ENCODE measurements at regions of chr4 and their contacts with region 1.

Region 1: GRCh38 chr4:184171011-184171410 is 46.7 kb downstream of the ENPP6 start:
- DNase-seq: peak; percentile 30
- H3K4me3 ChIP-seq: no peak overlapping the region
- H3K27ac ChIP-seq: no peak overlapping the region
- H3K4me1 ChIP-seq: no peaks in the 10 kb centered on the region
- H3K27me3 ChIP-seq: no peaks in the 10 kb centered on the region; the same call in 1 of the 2 replicates

Region 2: DNA sequence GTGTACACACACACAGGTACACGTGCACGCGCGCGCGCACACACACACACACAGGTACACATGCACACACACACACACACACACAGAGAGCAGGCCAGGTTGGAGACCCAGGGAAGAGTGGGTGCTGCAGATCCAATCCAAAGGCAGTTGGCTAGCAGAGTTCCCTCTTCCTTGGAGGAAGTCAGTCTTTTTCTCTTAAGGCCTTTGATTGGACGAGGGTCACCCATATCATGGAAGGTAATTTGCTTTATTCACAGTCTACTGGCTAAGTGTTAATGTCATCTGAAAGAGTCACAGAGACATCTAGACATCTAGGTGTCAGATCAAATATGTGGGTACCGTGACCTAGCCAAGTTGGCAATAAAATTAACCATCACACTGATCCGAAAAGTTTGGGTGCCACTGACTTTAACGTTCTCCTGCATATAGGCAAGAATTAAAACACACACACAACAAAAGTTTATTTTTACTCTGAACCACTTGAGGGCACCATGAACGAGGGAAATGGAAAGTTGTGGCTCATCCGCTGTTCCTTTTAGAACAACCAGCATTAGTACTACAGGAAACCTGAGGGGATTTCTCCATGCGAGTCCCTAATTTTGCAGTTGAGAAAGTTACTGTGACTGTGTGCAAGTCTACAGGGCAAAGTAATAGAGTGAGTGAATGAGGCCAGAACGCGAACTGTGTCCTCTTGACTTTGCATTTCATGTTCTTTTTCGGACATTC is 331.9 kb before region 1 on chr4:
- in situ Hi-C with region 1: loop called (anchors 5 kb)
- DNase-seq: peak; percentile 12
- H3K4me3 ChIP-seq: no peak overlapping the region
- H3K27ac ChIP-seq: no peak overlapping the region
- H3K4me1 ChIP-seq: no peaks in the 10 kb centered on the region
- H3K27me3 ChIP-seq: no peaks in the 10 kb centered on the region; the same call in 1 of the 2 replicates

Measured in GM23248 (cell line).